ENCODE measurements at regions of chr12 and their contacts with region 1.

Region 1: DNA sequence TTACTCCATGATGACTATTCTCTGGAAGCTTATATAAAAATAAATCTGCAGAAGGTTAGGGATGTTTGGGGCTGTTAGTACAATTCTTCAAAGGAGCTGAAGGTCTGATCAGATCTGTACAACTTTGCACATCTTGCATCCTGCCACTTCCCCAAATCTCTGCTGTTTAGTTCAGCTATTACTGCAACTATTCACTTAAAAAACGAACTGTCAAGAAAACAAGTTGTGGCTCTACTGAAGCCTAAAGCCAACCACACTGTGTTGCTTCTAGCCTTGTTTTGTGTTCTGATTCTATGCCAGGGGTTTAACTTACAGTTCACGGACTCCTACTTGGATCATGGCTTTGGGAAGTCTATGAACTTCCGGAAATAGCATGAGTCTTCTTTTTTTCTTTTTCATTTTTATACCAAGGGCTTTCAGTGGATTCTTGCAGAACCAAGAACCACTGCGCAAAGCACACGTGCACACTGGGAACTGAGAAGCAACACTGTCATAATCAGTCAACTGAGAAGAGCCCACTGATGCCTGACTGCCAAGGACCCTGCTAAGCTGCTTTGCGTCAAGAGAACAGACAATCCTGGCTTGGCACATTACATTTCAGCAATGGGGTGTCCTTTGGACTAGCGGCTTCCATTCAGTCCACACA is 66.3 kb upstream of the EEA1 start:
- DNase-seq: no peak
- ATAC-seq: peak; percentile 96
- H3K4me3 Mint-ChIP-seq: peak overlapping the region; percentile 61
- H3K27ac Mint-ChIP-seq: peak overlapping the region; percentile 90
- H3K4me1 Mint-ChIP-seq: peaks cover 32% of the 10 kb centered on the region
- H3K27me3 Mint-ChIP-seq: no peaks in the 10 kb centered on the region
- CTCF ChIP-seq: no peak

Region 2: DNA sequence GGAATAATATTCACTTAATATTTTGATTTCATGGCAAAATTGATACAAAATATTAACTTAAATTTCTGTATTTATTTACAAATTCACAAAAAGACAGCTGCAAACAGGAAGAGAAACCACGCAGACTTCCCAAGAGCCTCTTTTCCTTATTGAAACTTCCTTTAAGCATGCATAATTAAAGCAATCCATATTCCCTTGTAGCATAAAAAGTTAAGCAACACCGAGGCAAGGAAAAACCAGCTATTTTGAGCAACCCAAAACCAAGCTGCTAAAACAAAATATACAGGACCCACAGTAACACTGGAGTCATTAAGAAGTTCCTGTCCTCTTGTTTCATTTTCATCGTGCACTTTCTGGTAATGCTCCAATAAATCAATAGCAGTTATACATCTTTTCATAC is 124.3 kb before region 1 on chr12:
- CTCF ChIA-PET with region 1: no interaction called
- POLR2A ChIA-PET with region 1: no interaction called
- intact Hi-C with region 1: no loop called
- DNase-seq: no peak
- ATAC-seq: no peak
- H3K4me3 Mint-ChIP-seq: no peak overlapping the region
- H3K27ac Mint-ChIP-seq: no peak overlapping the region
- H3K4me1 Mint-ChIP-seq: peaks cover 7% of the 10 kb centered on the region
- H3K27me3 Mint-ChIP-seq: no peaks in the 10 kb centered on the region
- CTCF ChIP-seq: no peak

Region 3: DNA sequence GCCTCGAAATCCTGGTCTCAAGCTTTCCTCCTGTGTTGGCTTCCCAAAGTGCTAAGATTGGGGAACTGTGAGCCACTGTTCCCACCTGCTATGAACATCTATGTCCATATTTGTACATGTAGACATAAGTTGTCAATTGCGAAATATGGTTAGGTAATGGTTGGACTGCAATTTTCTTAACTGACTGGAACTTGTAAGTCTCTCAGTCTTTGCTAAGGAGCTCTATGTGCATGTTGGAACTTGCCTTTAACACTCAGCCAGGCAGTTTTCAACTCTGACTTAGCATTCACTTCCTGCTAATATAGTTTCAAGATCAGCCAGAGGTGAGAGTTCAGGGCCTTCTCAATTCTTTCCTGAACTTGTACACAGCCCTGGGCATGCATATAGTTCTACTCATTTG is 21.8 kb before region 1 on chr12:
- CTCF ChIA-PET with region 1: no interaction called
- POLR2A ChIA-PET with region 1: interaction called, 4 read pairs
- intact Hi-C with region 1: loop called (anchors 1 kb)
- DNase-seq: no peak
- ATAC-seq: no peak
- H3K4me3 Mint-ChIP-seq: no peak overlapping the region
- H3K27ac Mint-ChIP-seq: peak overlapping the region; percentile 62
- H3K4me1 Mint-ChIP-seq: peaks cover 58% of the 10 kb centered on the region
- H3K27me3 Mint-ChIP-seq: no peaks in the 10 kb centered on the region
- CTCF ChIP-seq: no peak

Region 4: GRCh38 chr12:93060666-93061471 is 65.5 kb after region 1 on chr12:
- CTCF ChIA-PET with region 1: no interaction called
- POLR2A ChIA-PET with region 1: no interaction called
- intact Hi-C with region 1: loop called (anchors 2 kb)
- DNase-seq: no peak
- ATAC-seq: peak; percentile 13
- H3K4me3 Mint-ChIP-seq: no peak overlapping the region
- H3K27ac Mint-ChIP-seq: no peak overlapping the region
- H3K4me1 Mint-ChIP-seq: peaks cover 16% of the 10 kb centered on the region
- H3K27me3 Mint-ChIP-seq: peaks cover 10% of the 10 kb centered on the region
- CTCF ChIP-seq: no peak

Region 5: GRCh38 chr12:93089805-93090569 is 94.6 kb after region 1 on chr12:
- CTCF ChIA-PET with region 1: no interaction called
- POLR2A ChIA-PET with region 1: no interaction called
- intact Hi-C with region 1: no loop called
- DNase-seq: no peak
- ATAC-seq: no peak
- H3K4me3 Mint-ChIP-seq: no peak overlapping the region
- H3K27ac Mint-ChIP-seq: no peak overlapping the region
- H3K4me1 Mint-ChIP-seq: peaks cover 3% of the 10 kb centered on the region
- H3K27me3 Mint-ChIP-seq: no peaks in the 10 kb centered on the region
- CTCF ChIP-seq: no peak

Region 6: DNA sequence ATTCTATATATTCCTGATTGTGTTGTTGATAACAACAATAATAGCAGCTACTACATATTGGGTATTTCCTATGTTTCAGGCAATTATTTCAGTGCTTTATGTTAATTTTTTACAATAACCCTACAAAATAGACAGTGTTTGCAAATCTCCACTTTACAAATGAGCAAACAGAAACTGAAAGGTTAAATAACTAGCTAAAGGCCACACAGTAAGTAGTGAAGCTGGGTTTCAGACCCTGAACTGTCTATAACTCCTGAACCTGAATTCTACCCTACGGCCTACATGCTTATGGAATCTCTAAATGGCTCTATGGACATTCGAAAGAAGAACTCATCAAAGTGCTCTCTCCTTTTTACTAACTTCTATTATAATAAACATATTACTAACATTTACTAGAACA is 362.7 kb after region 1 on chr12:
- CTCF ChIA-PET with region 1: no interaction called
- POLR2A ChIA-PET with region 1: interaction called, 21 read pairs
- intact Hi-C with region 1: no loop called
- DNase-seq: no peak
- ATAC-seq: no peak
- H3K4me3 Mint-ChIP-seq: no peak overlapping the region
- H3K27ac Mint-ChIP-seq: no peak overlapping the region
- H3K4me1 Mint-ChIP-seq: no peaks in the 10 kb centered on the region
- H3K27me3 Mint-ChIP-seq: no peaks in the 10 kb centered on the region
- CTCF ChIP-seq: no peak